ENCODE measurements at regions of chr13 and their contacts with region 1.

Region 1: GRCh38 chr13:114025714-114026431 is 52.0 kb upstream of the C13orf46 start:
- DNase-seq: no peak
- H3K4me3 ChIP-seq: no peak overlapping the region
- H3K27ac ChIP-seq: peak overlapping the region; percentile 68 to 79 (median 76)
- H3K4me1 ChIP-seq: peaks cover 29 to 53% (median 34%) of the 10 kb centered on the region in 4 donors
- H3K27me3 ChIP-seq: no peaks in the 10 kb centered on the region
- CTCF ChIP-seq: peak in 2 of 3 experiments; percentile 19 to 25
- EP300 ChIP-seq: no peak
- POLR2A ChIP-seq: no peak

Region 2: DNA sequence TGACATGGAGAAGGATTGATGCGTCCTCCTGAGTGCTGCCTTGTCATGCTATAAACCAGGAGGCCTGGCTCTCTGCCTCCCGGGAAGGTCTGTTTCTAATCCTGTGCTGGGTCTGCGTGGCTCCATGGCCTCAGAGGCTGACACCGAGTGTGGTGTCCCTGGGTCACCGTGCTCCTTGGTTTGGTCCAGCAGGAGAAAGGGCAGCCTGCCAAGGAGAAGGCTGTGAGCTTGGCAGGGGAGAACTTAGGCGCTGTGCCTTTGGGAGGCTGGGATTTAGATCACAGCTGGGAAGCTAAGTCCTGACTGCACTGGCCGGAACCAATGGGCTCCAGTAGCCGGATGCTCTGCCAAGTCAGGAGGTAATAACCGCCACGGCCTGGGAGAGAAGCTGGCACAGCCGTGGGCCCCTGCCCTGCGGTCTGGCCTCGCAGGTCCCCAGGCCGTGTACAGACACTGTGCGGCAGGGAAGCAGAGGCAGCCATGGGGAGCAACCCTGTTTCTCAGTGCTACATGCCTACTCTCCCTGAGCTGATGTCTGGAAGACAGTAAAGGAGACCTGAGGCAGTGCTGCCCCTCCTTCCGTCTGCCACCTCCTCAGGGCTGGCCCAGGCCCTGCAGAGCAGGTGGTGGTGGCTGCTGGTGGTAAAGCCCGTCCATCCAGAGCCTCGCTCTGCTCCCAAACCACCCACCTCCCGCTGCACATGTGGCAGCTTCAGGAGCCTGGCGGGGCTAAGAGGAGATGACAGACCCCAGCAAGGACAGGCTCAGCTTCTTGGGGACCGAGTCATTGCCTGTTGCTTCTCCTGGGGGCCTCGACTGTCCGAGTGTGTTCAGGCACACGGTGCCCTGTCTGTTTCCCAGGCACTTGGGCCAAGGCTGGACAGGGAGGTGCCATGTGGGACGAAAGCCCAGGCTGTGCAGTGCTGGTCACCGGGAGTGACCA is 96.9 kb before region 1 on chr13:
- intact Hi-C with region 1: no loop called
- DNase-seq: no peak
- H3K4me3 ChIP-seq: no peak overlapping the region
- H3K27ac ChIP-seq: peak overlapping the region; percentile 67 to 79 (median 72)
- H3K4me1 ChIP-seq: peaks cover 27 to 42% (median 37%) of the 10 kb centered on the region in 4 donors
- H3K27me3 ChIP-seq: no peaks in the 10 kb centered on the region
- CTCF ChIP-seq: no peak
- EP300 ChIP-seq: no peak
- POLR2A ChIP-seq: no peak

Region 3: DNA sequence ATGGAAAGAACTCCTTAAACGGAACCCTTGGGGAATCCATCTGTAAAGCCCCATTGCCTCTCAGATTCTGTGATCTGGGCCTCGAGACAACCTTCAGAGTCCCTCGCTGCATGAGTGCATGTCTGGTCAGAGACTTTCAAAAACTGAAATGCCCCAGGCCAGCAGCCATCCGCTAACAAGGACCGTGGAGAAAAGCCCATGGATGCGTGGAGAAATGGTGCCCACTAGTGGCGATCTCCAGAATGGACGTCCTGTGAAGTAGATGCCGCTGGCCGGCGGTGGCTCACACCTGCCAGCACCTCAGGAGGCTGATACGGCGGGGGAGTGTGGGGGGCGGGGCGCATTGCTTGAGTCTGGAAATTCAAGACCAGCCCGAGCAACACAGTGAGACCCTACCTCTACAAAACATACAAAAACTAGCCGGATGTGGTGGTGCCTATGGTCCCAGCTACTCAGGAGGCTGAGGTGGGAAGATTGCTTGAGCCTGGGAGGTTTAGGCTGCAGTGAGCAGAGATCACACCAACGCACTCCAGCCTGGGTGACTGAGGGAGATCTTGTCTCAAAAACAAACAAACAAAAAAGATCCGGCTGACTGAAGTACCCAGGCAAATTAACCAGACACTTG is 200.9 kb after region 1 on chr13:
- intact Hi-C with region 1: loop called (anchors 5 kb)
- DNase-seq: peak; percentile 98
- H3K4me3 ChIP-seq: no peak overlapping the region
- H3K27ac ChIP-seq: no peak overlapping the region
- H3K4me1 ChIP-seq: peaks cover 5 to 17% (median 10%) of the 10 kb centered on the region in 4 donors
- H3K27me3 ChIP-seq: peaks cover 0 to 23% (median 3%) of the 10 kb centered on the region in 4 donors
- CTCF ChIP-seq: peak in 2 of 3 experiments; percentile 96 to 98
- EP300 ChIP-seq: no peak
- POLR2A ChIP-seq: no peak

Measured in esophagus muscularis mucosa (tissue), 4 donors.